ENCODE measurements at regions of chr4 and their contacts with region 1.

Region 1: DNA sequence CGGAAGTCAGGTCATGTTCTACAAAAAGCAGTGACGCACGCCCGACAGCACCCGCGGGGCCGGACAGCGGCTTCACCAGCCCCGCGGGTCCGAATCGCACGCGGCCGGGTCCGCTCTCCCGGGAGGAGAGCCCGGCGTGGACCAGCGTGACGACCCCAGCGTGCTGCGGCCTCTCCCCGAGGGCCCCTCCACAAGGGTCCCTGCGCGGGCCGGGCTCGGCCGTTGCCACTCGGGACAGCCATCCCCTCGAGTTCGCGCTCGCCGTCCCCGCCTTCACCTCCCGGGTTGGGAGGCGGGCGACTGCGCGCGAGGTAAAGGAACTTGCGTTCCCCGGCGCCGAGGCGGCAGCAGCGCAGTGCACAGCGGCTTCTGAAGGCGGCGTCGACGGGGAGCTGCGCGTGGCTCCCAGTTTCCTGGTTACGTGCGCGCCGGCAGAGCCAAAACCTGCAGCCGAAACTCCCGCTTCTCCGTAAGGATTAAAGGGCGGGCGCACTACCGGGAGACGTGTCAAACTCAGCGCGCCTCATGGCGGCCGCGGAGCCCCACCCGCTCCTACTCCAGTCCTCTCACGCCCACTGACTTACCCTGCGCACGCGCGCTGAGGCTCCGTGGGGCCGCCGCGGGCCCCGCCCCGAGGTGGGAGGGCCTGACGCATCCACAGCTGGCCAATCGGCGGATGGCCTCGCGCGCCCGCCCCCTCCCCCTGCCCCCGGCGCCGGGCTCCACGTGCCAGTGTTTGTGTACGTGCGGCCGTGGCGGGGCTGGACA is 416 bp upstream of the LRP2BP start:
- DNase-seq: peak; percentile 93 to 100 (median 97)
- ATAC-seq: peak; percentile 97
- H3K4me3 ChIP-seq: peak overlapping the region; percentile 69
- H3K4me3 Mint-ChIP-seq: peak overlapping the region; percentile 82 to 100 (median 97)
- H3K27ac ChIP-seq: peak overlapping the region; percentile 97
- H3K27ac Mint-ChIP-seq: peak overlapping the region; percentile 90 to 100 (median 99)
- H3K4me1 ChIP-seq: peaks cover 12 to 15% of the 10 kb centered on the region in 2 donors
- H3K4me1 Mint-ChIP-seq: peaks cover 14 to 57% (median 27%) of the 10 kb centered on the region in 7 donors
- H3K27me3 ChIP-seq: no peaks in the 10 kb centered on the region
- H3K27me3 Mint-ChIP-seq: no peaks in the 10 kb centered on the region

Region 2: DNA sequence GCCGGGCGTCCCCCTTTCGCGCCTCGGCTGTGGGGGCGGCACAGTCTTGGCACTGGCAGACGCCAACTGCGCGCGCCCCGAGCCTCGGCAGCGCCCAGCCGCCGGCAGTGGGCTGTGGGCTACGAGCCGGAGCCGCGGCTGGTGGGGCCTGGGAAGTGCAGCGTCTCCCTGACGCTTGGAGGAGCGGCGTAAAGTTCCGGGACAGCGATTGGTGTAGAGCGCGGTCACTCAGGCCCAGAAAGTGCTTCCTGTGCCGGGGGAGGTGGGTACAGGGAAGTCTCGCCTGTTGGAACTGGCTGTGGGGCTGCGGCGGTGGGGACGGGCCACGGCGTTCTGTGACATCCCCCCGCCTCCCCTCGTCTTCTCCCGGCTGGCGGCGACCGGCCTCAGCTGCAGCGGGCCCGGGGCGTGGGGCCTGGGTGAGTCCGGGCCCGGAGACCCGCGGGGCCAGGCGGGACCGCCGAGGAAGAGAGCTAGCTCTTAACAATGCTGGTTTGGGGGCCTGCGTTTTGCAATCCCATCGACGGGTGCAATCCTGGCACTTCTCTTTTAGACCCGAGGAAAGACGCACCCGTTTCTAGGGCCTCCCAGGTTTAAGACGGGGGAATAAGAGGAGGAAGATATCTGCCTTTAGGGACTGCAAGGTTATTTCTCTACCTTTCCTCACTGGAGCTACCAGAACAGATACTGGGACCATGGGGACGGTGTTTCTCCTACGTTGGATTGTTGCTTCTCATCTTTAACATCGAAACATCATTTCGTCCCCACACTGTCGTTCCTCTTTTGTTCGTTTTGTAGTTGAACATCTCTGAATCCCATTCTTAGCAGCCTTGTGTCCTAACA is 1736.9 kb before region 1 on chr4 and contains the starts of genes RWDD4 and TRAPPC11:
- CTCF ChIA-PET with region 1: no interaction called
- POLR2A ChIA-PET with region 1: no interaction called
- intact Hi-C with region 1: loop called (anchors 1 kb)
- DNase-seq: peak; percentile 83 to 97 (median 95)
- ATAC-seq: peak; percentile 99
- H3K4me3 ChIP-seq: peak within 1 kb of the TSS; percentile 87
- H3K4me3 Mint-ChIP-seq: peak within 1 kb of the TSS; percentile 91 to 98 (median 96)
- H3K27ac ChIP-seq: peak within 1 kb of the TSS; percentile 96
- H3K27ac Mint-ChIP-seq: peak within 1 kb of the TSS; percentile 90 to 99 (median 95)
- H3K4me1 ChIP-seq: peaks cover 14 to 19% of the 10 kb centered on the region in 2 donors
- H3K4me1 Mint-ChIP-seq: peaks cover 35 to 48% (median 38%) of the 10 kb centered on the region in 7 donors
- H3K27me3 ChIP-seq: no peaks in the 10 kb centered on the region
- H3K27me3 Mint-ChIP-seq: no peaks in the 10 kb centered on the region
- total RNA-seq, gene RWDD4: 9.3 to 15.8 (median 11.6) TPM
- total RNA-seq, gene TRAPPC11: 26.3 to 48.8 (median 35.6) TPM

Region 3: GRCh38 chr4:185142912-185143595 is 253.1 kb before region 1 on chr4 and contains the start of gene SLC25A4:
- CTCF ChIA-PET with region 1: no interaction called
- POLR2A ChIA-PET with region 1: interaction called, 6 read pairs
- intact Hi-C with region 1: loop called in 1 of 2 experiments (anchors 1 kb)
- DNase-seq: peak; percentile 68 to 81 (median 75)
- ATAC-seq: peak; percentile 95
- H3K4me3 ChIP-seq: peak within 1 kb of the TSS; percentile 57
- H3K4me3 Mint-ChIP-seq: peak within 1 kb of the TSS; percentile 84 to 95 (median 90)
- H3K27ac ChIP-seq: peak within 1 kb of the TSS; percentile 52
- H3K27ac Mint-ChIP-seq: peak within 1 kb of the TSS in 7 of 9 donors; percentile 4 to 89 (median 83)
- H3K4me1 ChIP-seq: peaks cover 4 to 13% of the 10 kb centered on the region in 2 donors
- H3K4me1 Mint-ChIP-seq: peaks cover 11 to 15% (median 12%) of the 10 kb centered on the region in 7 donors
- H3K27me3 ChIP-seq: peaks cover 0 to 3% of the 10 kb centered on the region in 2 donors
- H3K27me3 Mint-ChIP-seq: peaks cover 15 to 69% (median 26%) of the 10 kb centered on the region in 5 donors
- total RNA-seq, gene SLC25A4: 0.60 to 7.2 (median 4.9) TPM

Region 4: DNA sequence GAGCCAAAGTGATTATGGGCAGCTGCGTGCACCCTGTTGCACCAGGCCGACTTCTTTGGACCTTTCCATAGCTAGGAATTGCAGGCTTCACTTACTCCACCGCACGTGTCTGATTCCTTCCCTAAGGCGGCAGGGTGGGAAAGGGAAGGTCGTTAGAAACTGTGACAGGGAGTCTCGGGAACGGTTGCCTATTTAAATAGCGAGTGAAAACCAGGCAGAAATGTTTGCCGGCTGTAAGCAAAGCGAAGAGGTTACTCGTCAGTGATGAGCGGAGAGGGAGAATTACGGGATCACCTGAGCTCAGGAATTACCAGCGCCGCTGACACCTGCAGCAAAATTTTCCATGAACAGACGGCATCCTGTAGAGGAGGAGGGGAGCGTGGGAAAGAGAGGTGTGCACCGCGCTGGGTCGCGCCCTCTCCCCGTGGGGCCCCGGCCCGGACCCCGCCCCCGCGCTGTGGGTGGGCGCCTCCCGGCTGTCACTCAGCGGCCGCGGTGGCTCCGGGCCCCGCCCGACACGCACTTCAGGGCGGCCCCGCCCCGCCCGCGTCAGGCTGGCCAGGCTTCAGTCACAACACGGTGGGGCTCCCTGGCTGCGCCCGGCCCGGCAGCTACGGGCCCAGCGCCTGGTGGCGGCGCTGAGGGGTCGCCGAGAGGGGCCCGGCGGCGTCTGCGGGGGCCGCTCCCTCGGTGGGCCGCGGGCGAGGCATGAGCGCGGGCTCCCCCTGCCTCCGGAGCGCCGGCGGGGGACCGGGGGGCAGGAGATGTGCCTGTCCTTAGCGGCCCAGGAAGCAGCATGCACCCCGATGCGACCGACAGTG is 186.9 kb before region 1 on chr4 and contains the start of gene SNX25:
- CTCF ChIA-PET with region 1: no interaction called
- POLR2A ChIA-PET with region 1: interaction called, 19 read pairs
- intact Hi-C with region 1: loop called (anchors 1 kb)
- DNase-seq: peak; percentile 77 to 93 (median 83)
- ATAC-seq: peak; percentile 96
- H3K4me3 ChIP-seq: peak within 1 kb of the TSS; percentile 81
- H3K4me3 Mint-ChIP-seq: peak within 1 kb of the TSS; percentile 87 to 95 (median 93)
- H3K27ac ChIP-seq: peak within 1 kb of the TSS; percentile 39
- H3K27ac Mint-ChIP-seq: peak within 1 kb of the TSS; percentile 82 to 93 (median 91)
- H3K4me1 ChIP-seq: peaks cover 27 to 28% of the 10 kb centered on the region in 2 donors
- H3K4me1 Mint-ChIP-seq: peaks cover 31 to 56% (median 47%) of the 10 kb centered on the region in 7 donors
- H3K27me3 ChIP-seq: no peaks in the 10 kb centered on the region
- H3K27me3 Mint-ChIP-seq: peaks cover 0 to 15% (median 0%) of the 10 kb centered on the region in 5 donors
- total RNA-seq, gene SNX25: 8.0 to 18.9 (median 14.3) TPM

Region 5: DNA sequence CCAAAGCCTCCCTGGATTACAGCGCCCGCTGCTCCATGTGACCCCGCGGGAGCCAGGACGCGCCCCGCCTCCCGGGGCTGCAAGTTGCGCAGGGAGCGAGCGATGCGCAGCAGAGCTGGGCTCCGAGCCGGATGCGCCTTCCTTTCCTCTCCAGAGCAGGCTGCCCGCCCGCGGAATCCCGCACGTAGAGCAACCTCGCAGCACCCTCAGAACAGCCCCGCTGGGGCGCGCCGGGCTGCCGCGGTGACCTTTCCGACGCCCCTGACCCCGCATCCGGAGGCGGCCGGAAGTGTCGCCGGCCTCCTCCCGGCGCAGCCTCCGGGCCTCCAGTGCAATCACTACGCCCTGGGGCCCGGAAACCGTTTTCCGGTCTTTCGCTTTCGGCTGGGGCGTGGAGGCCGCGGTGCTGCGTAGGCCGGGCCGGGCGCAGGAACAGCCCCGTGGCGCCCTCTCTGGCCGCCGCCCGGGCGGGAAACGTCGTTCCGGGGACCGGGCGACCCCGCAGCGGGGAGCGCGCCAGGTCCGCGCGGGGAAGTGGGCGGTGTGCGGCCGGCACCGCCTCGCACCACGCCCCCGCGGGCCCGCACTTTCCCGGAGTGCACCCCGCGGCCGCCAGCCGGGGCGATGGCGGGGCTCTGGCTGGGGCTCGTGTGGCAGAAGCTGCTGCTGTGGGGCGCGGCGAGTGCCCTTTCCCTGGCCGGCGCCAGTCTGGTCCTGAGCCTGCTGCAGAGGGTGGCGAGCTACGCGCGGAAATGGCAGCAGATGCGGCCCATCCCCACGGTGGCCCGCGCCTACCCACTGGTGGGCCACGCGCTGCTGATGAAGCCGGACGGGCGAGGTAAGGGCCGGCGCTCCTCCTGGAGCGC is 795.3 kb after region 1 on chr4 and contains the start of gene CYP4V2:
- CTCF ChIA-PET with region 1: no interaction called
- POLR2A ChIA-PET with region 1: interaction called, 7 read pairs
- intact Hi-C with region 1: loop called in 1 of 2 experiments (anchors 5 kb)
- DNase-seq: peak; percentile 68 to 94 (median 90)
- ATAC-seq: peak; percentile 90
- H3K4me3 ChIP-seq: peak within 1 kb of the TSS; percentile 91
- H3K4me3 Mint-ChIP-seq: peak within 1 kb of the TSS; percentile 89 to 97 (median 94)
- H3K27ac ChIP-seq: peak within 1 kb of the TSS; percentile 95
- H3K27ac Mint-ChIP-seq: peak within 1 kb of the TSS; percentile 94 to 99 (median 98)
- H3K4me1 ChIP-seq: peaks cover 12 to 19% of the 10 kb centered on the region in 2 donors
- H3K4me1 Mint-ChIP-seq: peaks cover 34 to 62% (median 56%) of the 10 kb centered on the region in 7 donors
- H3K27me3 ChIP-seq: no peaks in the 10 kb centered on the region
- H3K27me3 Mint-ChIP-seq: no peaks in the 10 kb centered on the region
- total RNA-seq, gene CYP4V2: 19.7 to 41.4 (median 26.0) TPM

Region 6: DNA sequence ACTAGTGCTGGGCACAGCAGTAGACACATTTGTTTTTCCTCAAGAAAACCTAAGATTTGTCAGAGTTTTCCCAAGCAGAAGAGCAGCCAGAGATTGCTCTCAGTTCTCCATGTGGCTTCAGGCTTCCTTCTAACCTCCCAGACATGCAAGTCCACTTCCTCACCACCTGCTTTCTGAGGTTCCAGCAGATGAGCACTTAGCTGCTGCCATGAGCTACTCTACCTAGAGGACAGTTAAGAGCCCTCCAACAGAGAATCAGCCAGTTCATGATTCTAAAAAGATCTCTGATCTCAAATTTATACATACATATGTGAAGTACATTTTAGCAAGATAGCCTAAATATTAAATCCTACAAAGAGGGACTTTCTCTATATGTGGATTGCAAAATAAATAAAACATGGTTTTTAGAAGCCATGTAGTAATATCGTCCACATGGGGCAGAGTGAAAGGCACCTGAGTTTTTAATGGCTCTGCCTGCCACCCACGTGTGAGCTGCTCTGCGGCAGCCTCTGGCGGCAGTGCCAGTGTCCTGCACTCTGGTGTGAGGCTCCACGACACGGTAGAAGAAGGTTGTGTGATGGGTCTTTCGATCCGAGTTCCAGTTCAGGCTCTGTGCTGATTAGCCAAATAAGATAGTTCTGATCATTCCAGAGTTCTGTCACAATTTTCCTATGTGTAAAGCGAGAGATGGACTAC is 805.5 kb after region 1 on chr4:
- CTCF ChIA-PET with region 1: no interaction called
- POLR2A ChIA-PET with region 1: interaction called, 12 read pairs
- intact Hi-C with region 1: loop called in 1 of 2 experiments (anchors 5 kb)
- DNase-seq: peak in 8 of 9 donors; percentile 12 to 70 (median 50)
- ATAC-seq: peak; percentile 98
- H3K4me3 ChIP-seq: no peak overlapping the region
- H3K4me3 Mint-ChIP-seq: peak overlapping the region in 7 of 10 donors; percentile 0 to 55 (median 35)
- H3K27ac ChIP-seq: peak overlapping the region; percentile 48
- H3K27ac Mint-ChIP-seq: peak overlapping the region in 8 of 9 donors; percentile 14 to 97 (median 56)
- H3K4me1 ChIP-seq: no peaks in the 10 kb centered on the region
- H3K4me1 Mint-ChIP-seq: peaks cover 8 to 51% (median 20%) of the 10 kb centered on the region in 7 donors
- H3K27me3 ChIP-seq: no peaks in the 10 kb centered on the region
- H3K27me3 Mint-ChIP-seq: no peaks in the 10 kb centered on the region

Measured in naive thymus-derived CD4-positive, alpha-beta T cell (primary cell).